Heart left ventricle (tissue), 16 donors: ENCODE measurements at regions of chr22 and their contacts with region 1.

Region 1: DNA sequence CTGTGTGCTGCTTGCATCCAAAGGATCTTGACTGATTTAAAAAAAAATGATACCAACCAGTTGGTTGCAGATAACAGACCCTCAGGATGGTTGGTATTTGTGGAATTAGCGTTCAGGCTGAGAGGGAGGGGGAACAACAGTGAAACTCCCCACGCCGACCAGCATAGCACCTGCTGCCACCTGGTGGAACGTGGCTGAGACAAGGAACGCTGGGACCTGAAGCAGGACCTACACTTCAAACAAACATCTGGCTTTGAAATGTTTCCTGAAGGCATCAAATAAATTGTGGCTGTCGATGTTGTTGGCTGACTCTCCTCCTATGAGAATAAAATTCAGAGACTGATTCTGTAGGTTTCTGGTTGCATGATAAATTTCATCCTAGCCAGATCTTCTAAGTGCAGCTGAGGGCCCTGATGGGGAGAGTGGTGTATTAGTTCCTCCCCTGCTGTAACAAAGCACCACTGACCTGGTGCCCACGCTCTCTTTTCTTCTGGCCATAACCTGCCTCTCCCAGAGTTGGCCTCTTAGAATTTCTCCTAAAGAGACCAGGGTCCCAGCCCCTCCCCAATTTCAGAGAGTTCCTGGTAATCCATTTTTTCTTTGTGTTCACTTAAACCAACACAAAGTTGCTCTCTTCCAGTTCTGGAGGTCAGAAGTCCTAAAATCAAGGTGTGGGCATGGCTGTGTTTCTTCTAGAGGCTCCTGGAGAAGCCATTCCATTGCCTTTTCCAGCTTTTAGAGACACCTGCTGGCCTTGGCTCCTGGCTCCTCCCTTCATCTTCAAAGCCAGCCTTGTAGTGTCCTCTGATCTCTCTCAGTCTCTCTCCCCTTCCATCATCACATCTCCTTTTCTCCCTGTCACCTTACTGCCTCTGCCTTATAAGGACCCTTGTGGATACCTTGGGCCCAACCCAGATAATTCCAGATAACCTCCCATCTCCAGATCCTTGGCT is 17.3 kb downstream of the APOL2 start:
- DNase-seq: peak in 3 of 5 donors; percentile 41 to 59 (median 58)
- ATAC-seq: peak; percentile 68 to 83 (median 74)
- H3K4me3 ChIP-seq: no peak overlapping the region
- H3K27ac ChIP-seq: no peak overlapping the region
- H3K4me1 ChIP-seq: peaks cover 0 to 32% (median 16%) of the 10 kb centered on the region in 12 donors
- H3K27me3 ChIP-seq: no peaks in the 10 kb centered on the region
- CTCF ChIP-seq: peak; percentile 55 to 78 (median 64)
- POLR2A ChIP-seq: no peak

Region 2: DNA sequence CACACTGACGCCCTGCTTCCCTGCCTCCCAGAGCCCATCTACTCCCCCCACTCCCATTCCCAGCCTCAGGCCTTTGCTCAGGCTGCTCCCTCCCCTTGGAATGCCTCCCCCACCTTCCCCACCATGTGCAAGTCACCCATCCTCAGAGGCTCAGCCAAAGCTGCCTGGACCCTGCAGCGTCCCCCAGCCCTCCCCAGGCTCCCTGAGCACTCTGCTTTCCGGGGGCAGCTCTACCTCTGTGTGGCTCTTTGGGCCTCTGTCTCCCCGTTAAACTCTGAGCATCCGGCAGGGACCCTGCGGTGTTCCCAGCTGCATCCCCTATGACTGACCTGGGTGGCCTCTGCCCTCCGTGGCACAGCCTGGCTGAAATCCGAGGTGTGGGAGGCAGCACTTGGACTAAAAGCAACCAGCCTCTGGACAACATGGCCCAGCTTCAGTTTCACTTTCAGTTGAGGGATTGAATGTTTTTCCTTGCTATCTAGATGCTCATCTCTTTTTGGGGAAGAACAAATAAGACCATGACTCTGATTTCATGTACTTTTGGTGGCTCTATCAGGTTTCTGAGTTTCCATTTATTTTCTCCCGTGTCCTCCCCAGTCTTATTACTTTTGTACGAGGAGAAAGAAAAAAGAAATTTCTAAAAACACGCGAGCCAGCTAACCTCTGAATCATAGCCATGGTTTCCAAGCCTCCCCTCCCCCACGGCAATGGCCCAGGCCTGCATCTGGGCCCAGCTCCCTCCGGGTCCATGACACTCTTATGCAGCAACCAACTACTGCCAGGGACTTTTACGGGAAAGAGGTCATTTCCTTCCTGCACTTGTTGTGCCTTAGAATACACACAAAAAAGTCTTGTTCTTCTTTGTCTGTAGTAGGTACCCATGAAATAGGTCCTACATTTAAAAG is 65.3 kb before region 1 on chr22:
- intact Hi-C with region 1: loop called in 1 of 10 experiments (anchors 10 kb)
- DNase-seq: peak; percentile 86 to 93 (median 91)
- ATAC-seq: peak; percentile 66 to 85 (median 82)
- H3K4me3 ChIP-seq: peak overlapping the region; percentile 5 to 79 (median 63)
- H3K27ac ChIP-seq: peak overlapping the region; percentile 86 to 97 (median 91)
- H3K4me1 ChIP-seq: peaks cover 11 to 93% (median 49%) of the 10 kb centered on the region in 12 donors
- H3K27me3 ChIP-seq: no peaks in the 10 kb centered on the region
- CTCF ChIP-seq: no peak
- POLR2A ChIP-seq: peak in 1 of 2 donors; percentile 61

Region 3: GRCh38 chr22:36277482-36278291 is 55.6 kb after region 1 on chr22:
- intact Hi-C with region 1: loop called in 4 of 10 experiments (anchors 10 kb)
- DNase-seq: peak in 3 of 5 donors; percentile 57 to 62 (median 60)
- ATAC-seq: peak; percentile 38 to 80 (median 63)
- H3K4me3 ChIP-seq: peak overlapping the region in 3 of 12 donors; percentile 1 to 14 (median 13)
- H3K27ac ChIP-seq: peak overlapping the region in 2 of 12 donors; percentile 18 to 24
- H3K4me1 ChIP-seq: peaks cover 0 to 15% (median 9%) of the 10 kb centered on the region in 12 donors
- H3K27me3 ChIP-seq: no peaks in the 10 kb centered on the region
- CTCF ChIP-seq: peak; percentile 65 to 87 (median 76)
- POLR2A ChIP-seq: no peak

Region 4: GRCh38 chr22:36286471-36287224 is 64.6 kb after region 1 on chr22:
- intact Hi-C with region 1: loop called in 1 of 10 experiments (anchors 10 kb)
- DNase-seq: peak; percentile 75 to 85 (median 79)
- ATAC-seq: peak; percentile 74 to 88 (median 79)
- H3K4me3 ChIP-seq: no peak overlapping the region
- H3K27ac ChIP-seq: peak overlapping the region in 10 of 12 donors; percentile 25 to 88 (median 60)
- H3K4me1 ChIP-seq: peaks cover 0 to 24% (median 13%) of the 10 kb centered on the region in 12 donors
- H3K27me3 ChIP-seq: no peaks in the 10 kb centered on the region
- CTCF ChIP-seq: peak; percentile 75 to 96 (median 88)
- POLR2A ChIP-seq: no peak

Region 5: DNA sequence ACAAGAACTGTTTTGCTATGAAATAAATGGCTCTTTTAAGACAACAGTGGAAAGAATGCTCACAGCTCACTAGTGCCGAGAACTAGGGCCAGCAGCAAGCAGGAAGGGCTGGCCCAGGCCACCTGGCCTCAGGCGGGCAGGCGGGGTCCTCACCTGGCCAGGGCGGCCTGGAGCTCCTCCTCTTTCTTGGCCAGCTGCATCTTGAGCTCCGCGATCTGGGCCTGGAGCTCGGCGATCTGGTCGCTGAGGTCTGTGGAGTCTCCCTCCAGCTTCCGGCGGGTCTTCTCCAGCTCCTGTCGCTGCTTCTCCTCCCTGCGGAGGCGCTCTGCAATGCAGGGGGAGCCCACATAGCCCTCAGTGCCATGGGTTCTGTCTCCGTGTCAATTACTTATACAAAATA is 74.6 kb after region 1 on chr22:
- intact Hi-C with region 1: no loop called
- DNase-seq: peak in 2 of 5 donors; percentile 22 to 64
- ATAC-seq: no peak
- H3K4me3 ChIP-seq: no peak overlapping the region
- H3K27ac ChIP-seq: peak overlapping the region in 1 of 12 donors; percentile 70
- H3K4me1 ChIP-seq: peaks cover 0 to 7% (median 0%) of the 10 kb centered on the region in 12 donors
- H3K27me3 ChIP-seq: no peaks in the 10 kb centered on the region
- CTCF ChIP-seq: no peak
- POLR2A ChIP-seq: no peak